CD8-positive, alpha-beta T cell (primary cell): ENCODE measurements at regions of chr3 and their contacts with region 1.

Region 1: DNA sequence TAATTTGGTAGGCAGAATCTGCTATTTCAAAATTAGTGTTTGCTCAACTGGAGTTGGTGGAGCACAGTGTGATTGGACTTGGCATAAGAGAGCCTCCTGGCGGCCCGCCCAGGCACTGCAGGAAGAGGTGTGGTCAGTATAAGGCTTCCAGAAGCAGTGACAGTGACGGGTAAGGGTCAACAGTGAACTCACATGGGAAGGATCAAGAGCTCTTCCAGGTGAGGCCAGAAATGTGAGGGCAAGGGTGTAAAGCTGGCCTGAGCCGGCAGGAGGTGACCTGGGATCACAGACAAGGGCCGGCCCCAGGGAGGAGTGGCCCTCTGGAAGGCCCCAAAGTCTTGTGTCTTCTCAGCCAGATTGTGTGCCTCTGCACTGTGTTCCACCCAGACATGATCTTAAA is 93.2 kb upstream of the RNF7 start:
- DNase-seq: peak; percentile 32 to 78 (median 64)
- ATAC-seq: peak; percentile 77
- H3K4me3 ChIP-seq: no peak overlapping the region
- H3K4me3 Mint-ChIP-seq: no peak overlapping the region
- H3K27ac ChIP-seq: no peak overlapping the region
- H3K27ac Mint-ChIP-seq: no peak overlapping the region
- H3K4me1 ChIP-seq: no peaks in the 10 kb centered on the region
- H3K4me1 Mint-ChIP-seq: no peaks in the 10 kb centered on the region
- H3K27me3 ChIP-seq: no peaks in the 10 kb centered on the region
- H3K27me3 Mint-ChIP-seq: no peaks in the 10 kb centered on the region
- CTCF ChIP-seq: peak; percentile 80

Region 2: GRCh38 chr3:141632779-141633374 is 12.1 kb before region 1 on chr3:
- CTCF ChIA-PET with region 1: interaction called, 12 read pairs
- POLR2A ChIA-PET with region 1: no interaction called
- intact Hi-C with region 1: no loop called
- DNase-seq: peak in 1 of 9 experiments; percentile 11
- ATAC-seq: no peak
- H3K4me3 ChIP-seq: no peak overlapping the region
- H3K4me3 Mint-ChIP-seq: no peak overlapping the region
- H3K27ac ChIP-seq: no peak overlapping the region
- H3K27ac Mint-ChIP-seq: no peak overlapping the region
- H3K4me1 ChIP-seq: no peaks in the 10 kb centered on the region
- H3K4me1 Mint-ChIP-seq: no peaks in the 10 kb centered on the region
- H3K27me3 ChIP-seq: no peaks in the 10 kb centered on the region
- H3K27me3 Mint-ChIP-seq: no peaks in the 10 kb centered on the region
- CTCF ChIP-seq: no peak